A549 (cell line): ENCODE measurements at regions of chr6 and their contacts with region 1.

Region 1: DNA sequence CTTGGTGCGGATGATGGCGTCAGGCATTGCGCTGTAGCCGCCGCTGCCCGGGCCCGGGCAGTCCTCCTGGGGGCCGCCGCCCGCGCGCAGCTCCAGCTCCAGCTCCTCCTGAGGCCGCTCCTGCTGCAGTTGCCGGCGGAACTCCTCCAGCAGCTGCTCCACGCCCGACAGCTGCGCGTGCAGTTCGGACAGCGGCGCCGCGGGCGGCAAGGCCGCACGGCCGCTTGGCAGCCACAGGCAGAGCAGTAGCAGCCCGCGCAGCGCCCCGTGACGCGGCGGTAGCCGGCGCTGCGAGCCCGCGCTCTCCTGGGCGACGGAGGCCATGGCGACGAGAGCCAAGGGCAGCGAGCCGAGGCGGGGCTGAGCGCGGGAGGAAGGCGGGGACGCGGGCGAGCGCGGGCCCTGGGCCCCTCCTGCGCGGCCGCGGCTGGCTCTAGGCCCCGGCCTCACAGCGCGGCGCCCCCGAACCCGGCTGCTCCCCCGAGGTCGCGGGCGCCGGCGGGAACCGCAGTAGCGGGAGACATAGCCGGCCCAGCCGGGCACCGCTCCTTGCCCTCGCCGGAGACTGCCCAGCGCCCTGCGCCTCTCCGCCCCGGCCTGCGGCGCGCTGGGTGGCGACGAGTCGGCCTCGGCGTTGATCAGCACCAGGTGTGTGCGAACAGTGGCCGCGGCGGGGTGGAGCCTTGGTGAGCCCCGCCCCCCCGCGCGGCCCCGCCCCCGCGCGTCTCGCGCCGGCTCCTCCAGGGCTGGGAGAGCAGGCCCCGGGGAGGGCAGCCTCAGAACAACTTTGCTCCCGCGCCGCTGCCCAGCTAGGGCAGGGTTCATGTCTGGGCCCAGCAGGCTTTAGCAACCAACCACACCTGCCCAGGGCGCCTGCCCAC is at the start of gene LRP11:
- DNase-seq: peak; percentile 82 to 87
- ATAC-seq: peak; percentile 87 to 91
- H3K4me3 ChIP-seq: peak within 1 kb of the TSS; percentile 65
- H3K27ac ChIP-seq: peak within 1 kb of the TSS; percentile 96 to 99
- H3K4me1 ChIP-seq: peaks cover 57% of the 10 kb centered on the region
- CTCF ChIP-seq: no peak
- EP300 ChIP-seq: no peak
- POLR2A ChIP-seq: peak; percentile 61
- RAD21 ChIP-seq: no peak
- polyA plus RNA-seq, gene LRP11: 57.7 and 59.2 TPM in 2 replicates

Region 2: GRCh38 chr6:149761438-149761837 is 102.5 kb before region 1 on chr6:
- CTCF ChIA-PET with region 1: no interaction called
- POLR2A ChIA-PET with region 1: no interaction called
- DNase-seq: no peak
- ATAC-seq: no peak
- H3K4me3 ChIP-seq: no peak overlapping the region
- H3K27ac ChIP-seq: no peak overlapping the region
- H3K4me1 ChIP-seq: peaks cover 10% of the 10 kb centered on the region; the same call in 2 of the 3 replicates
- CTCF ChIP-seq: no peak
- EP300 ChIP-seq: no peak
- POLR2A ChIP-seq: no peak
- RAD21 ChIP-seq: no peak

Region 3: GRCh38 chr6:149897015-149897697 is 33.2 kb after region 1 on chr6:
- CTCF ChIA-PET with region 1: interaction called, 10 read pairs
- POLR2A ChIA-PET with region 1: no interaction called
- DNase-seq: peak; percentile 46 to 52
- ATAC-seq: peak; percentile 76 to 79
- H3K4me3 ChIP-seq: no peak overlapping the region
- H3K27ac ChIP-seq: peak overlapping the region; percentile 77 to 94
- H3K4me1 ChIP-seq: peaks cover 42% of the 10 kb centered on the region
- CTCF ChIP-seq: no peak
- EP300 ChIP-seq: no peak
- POLR2A ChIP-seq: no peak
- RAD21 ChIP-seq: no peak

Region 4: DNA sequence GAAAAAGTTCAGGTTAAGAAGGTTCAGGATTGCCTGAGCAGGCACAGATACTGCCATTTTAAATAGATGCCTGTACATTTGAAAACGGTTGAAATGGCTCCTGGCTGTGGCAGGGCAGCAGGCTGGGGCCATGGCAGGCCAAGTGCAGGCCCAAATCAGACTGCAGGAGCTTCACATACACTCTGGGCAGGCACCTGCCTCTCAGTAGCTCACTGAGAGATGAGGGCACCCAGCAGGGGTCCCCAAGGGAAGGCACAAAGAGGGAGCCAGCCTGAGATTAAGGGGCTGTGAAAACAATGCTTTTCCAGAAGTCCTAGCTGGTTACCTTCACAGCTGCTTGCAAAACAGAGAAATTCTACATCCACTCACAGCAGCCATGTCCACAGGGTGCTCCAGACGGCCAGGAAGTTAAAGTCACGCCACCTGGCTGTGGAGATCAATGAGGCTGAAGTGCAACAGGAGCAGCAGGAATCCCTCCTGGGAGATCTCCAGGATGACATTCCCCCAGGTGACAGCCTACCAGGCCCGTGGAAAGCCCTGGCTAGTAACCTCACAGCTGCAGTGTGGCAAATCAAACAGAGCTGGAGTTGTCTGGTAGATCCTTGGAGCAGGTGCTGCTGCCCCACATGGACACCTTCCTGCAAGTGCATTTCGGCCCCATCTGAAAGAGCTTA is 40.1 kb after region 1 on chr6:
- CTCF ChIA-PET with region 1: interaction called, 11 read pairs
- POLR2A ChIA-PET with region 1: no interaction called
- DNase-seq: no peak
- ATAC-seq: no peak
- H3K4me3 ChIP-seq: no peak overlapping the region
- H3K27ac ChIP-seq: no peak overlapping the region; a peak in 1 of 6 replicates
- H3K4me1 ChIP-seq: no peaks in the 10 kb centered on the region
- CTCF ChIP-seq: no peak
- EP300 ChIP-seq: no peak
- POLR2A ChIP-seq: no peak
- RAD21 ChIP-seq: no peak